Activated naive CD4-positive, alpha-beta T cell treated with anti-CD3 and anti-CD28 coated beads for 36 hours (primary cell): ENCODE measurements at regions of chr4 and their contacts with region 1.

Region 1: GRCh38 chr4:2761035-2761923 is 5.1 kb upstream of the TNIP2 start:
- DNase-seq: no peak
- H3K4me3 Mint-ChIP-seq: no peak overlapping the region
- H3K27ac Mint-ChIP-seq: no peak overlapping the region
- H3K4me1 Mint-ChIP-seq: peaks cover 5% of the 10 kb centered on the region
- H3K27me3 Mint-ChIP-seq: no peaks in the 10 kb centered on the region

Region 2: DNA sequence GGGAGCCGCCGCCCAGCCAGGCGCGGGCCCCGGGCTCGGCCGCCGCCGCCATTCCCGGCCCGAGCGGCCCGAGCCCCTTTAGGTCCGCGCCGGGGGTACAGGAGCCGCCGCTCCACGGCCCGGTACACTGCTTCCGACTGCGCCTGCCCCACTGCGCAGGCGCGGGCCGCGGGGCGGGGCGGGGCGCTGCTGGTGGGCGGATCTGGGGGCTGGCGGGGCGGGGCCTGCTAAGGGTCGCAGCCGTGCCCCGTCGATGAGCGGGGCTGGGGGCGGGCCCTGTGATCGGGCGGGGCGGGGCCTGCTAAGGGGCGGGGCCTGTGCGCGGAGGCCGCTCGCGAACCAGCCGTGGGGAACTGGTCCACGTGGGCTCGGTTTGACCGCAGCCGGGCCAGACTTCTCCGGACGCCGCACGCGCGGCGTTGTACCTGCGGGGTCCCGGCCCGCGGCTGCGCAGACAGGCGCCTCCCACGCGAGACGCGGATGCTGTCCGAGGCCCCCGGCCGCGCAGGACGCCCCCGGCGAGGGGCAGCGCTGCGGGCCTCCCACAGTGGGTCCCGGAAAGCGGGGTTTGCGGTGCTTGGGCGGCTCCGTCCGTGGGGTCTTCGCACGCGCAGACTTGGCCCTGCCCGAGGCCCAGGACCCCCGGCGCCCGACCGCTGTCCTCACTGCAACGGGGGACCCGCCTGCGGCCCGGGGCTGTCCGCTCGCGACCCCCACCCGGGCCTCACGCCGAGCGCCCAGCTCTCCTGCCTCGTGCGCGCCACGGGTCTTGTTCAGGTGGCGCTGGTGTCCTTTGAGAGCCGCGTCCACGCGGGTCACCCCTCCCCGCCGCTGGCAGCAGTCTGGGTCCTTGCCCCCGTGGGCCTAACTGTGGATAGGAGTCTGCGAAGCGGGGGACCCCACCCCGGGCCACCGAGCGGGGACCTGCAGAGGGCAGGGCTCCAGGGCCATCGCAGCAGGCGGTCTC is 1787.6 kb before region 1 on chr4 and contains the start of gene DGKQ:
- CTCF ChIA-PET with region 1: no interaction called
- intact Hi-C with region 1: no loop called
- DNase-seq: peak; percentile 81
- H3K4me3 Mint-ChIP-seq: peak within 1 kb of the TSS; percentile 59
- H3K27ac Mint-ChIP-seq: no peak within 1 kb of the TSS
- H3K4me1 Mint-ChIP-seq: peaks cover 5% of the 10 kb centered on the region
- H3K27me3 Mint-ChIP-seq: no peaks in the 10 kb centered on the region
- total RNA-seq, gene DGKQ: 10.8 to 11.1 TPM

Region 3: DNA sequence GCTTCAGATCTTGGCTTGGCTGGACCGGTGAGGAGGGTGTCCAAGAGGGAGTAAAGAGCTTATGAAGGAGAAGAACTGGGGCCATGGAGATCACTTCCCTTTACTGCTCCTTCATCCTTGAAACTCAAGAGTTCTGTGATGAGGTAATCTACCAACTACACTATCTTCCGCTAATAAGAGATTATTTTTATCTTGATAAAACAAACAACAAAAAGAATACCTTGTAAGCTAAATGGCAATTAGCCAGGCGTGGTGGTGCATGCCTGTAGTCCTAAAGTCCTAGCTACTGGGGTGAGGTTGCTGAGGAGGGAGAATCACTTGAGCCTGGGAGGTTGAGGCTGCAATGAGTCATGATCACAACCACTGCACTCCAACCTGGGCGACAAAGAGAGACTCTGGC is 566.8 kb before region 1 on chr4:
- CTCF ChIA-PET with region 1: no interaction called
- intact Hi-C with region 1: no loop called
- DNase-seq: no peak
- H3K4me3 Mint-ChIP-seq: no peak overlapping the region
- H3K27ac Mint-ChIP-seq: no peak overlapping the region
- H3K4me1 Mint-ChIP-seq: no peaks in the 10 kb centered on the region
- H3K27me3 Mint-ChIP-seq: no peaks in the 10 kb centered on the region

Region 4: GRCh38 chr4:2484993-2485392 is 276.3 kb before region 1 on chr4:
- CTCF ChIA-PET with region 1: no interaction called
- intact Hi-C with region 1: no loop called
- DNase-seq: peak; percentile 85
- H3K4me3 Mint-ChIP-seq: peak overlapping the region; percentile 46
- H3K27ac Mint-ChIP-seq: peak overlapping the region; percentile 68
- H3K4me1 Mint-ChIP-seq: peaks cover 87% of the 10 kb centered on the region
- H3K27me3 Mint-ChIP-seq: no peaks in the 10 kb centered on the region

Region 5: DNA sequence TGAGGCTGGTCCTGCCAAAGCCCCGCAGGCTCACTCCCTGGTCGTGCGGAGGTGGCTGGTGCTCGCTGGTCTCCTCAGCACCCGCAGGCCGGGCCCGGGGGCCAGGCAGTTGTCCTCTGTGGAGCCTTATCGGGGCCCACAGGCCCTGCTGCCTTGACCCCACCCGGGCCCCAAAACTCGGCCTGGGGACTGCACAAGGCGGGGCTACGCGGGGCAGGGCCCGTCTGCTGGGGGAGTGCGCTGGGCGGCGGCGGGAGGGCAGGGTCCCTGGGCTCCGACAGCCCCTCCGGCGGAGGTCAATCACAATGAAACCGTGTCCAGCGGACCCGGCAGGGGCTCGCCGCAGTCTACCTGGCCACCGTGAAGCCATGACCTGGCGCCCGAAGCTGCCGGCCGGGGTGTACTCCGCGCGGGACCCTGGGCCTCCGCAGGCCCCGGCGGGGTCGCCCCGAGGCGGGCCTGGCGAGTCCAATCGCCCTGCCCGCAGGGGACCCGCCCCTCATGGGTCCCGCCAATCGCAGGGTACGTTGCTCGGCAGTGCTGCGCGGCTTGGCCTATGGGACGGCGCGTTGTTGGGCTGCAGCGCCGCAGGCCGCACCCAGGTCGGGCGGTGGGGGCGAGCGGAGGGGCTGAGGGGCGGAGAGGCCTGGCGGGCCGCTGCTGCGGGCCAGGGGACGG is 82.1 kb after region 1 on chr4 and contains the start of gene ADD1:
- CTCF ChIA-PET with region 1: interaction called, 4 read pairs
- intact Hi-C with region 1: loop called (anchors 2 kb)
- DNase-seq: peak; percentile 92
- H3K4me3 Mint-ChIP-seq: peak within 1 kb of the TSS; percentile 83
- H3K27ac Mint-ChIP-seq: peak within 1 kb of the TSS; percentile 91
- H3K4me1 Mint-ChIP-seq: peaks cover 58% of the 10 kb centered on the region
- H3K27me3 Mint-ChIP-seq: no peaks in the 10 kb centered on the region
- total RNA-seq, gene ADD1: 165 TPM

Region 6: DNA sequence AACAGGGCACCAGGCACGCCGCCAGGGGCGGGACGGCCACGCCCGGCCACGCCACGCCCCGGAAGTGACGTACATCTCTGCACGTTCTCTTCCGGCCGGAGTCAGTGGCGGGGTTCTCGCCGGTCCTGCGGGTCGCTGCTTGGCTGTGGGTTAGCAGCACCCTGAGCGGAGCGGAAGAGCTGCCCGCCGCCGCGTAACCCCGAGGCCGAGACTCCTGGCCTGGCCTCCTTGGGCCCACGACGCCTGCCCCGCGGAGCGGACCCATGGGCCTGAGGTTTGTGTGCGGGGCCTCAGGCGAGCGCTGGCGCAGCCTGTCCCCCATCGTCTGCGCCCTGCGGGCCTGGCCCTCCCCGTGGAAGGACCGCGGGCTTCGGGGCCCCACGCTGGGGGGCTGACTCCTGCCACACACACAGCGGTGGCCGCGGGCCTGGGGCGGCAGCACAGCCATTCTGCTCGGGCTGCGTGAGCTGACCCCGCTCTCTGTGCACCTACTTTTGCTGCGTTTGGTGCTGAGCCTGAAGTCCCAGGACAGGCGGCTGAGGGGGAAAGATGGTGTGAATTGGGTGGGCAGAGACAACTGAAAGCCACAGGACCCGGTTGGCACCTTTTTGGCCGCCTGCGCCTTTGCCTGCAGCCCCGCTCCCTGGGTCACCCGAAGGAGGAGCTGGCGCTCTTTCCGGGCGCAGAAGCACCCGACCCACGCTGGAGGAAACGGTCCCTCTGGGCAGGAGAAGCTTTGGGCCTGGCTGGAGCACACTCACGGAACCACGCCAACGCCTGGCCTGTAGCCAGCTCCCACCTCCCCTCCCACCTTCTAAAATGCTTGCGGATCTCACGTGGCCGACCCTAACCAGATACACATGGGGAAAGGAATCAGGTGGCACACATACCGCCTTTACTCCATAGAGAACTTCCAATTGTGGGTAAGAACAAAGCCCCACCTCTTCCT is 173.8 kb after region 1 on chr4:
- CTCF ChIA-PET with region 1: interaction called, 6 read pairs
- intact Hi-C with region 1: loop called (anchors 1 kb)
- DNase-seq: peak; percentile 97
- H3K4me3 Mint-ChIP-seq: peak overlapping the region; percentile 89
- H3K27ac Mint-ChIP-seq: peak overlapping the region; percentile 96
- H3K4me1 Mint-ChIP-seq: peaks cover 57% of the 10 kb centered on the region
- H3K27me3 Mint-ChIP-seq: no peaks in the 10 kb centered on the region

Region 7: DNA sequence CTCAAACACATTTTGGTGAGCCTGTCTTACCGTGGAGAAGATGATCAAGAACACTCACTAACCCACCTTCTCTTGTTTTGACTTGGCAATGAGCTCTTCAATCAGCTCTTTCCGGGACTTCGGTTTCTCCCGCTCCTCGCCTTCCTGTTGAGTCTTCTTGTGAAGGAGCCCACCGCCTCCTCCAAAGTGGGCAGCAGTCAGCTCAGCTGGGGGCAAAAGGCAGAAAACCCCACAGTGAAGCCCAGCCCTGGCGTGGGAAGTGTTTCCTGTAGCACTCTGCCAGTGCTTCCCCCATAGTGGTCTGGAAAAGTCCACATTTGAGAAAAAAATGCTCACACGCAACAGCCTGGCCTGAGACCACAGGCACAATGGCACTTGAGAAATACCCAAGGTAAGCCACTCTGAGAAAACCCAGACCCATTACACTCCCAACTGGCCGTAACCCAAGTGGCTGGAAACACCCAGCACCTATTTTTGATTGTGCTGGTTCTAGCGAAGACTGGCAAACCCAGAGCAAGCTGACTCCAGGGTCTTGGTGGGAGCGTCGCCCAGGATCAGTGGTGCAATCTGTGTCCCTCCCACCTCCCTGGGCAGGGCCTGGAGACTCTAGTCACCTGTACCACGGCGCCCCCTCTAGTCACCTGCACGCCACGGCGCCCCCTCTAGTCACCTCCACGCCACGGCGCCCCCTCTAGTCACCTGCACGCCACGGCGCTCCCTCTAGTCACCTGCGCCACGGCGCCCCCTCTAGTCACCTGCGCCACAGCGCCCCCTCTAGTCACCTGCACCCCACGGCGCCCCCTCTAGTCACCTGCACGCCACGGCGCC is 193.3 kb after region 1 on chr4:
- CTCF ChIA-PET with region 1: interaction called, 7 read pairs
- intact Hi-C with region 1: loop called (anchors 1 kb)
- DNase-seq: peak; percentile 85
- H3K4me3 Mint-ChIP-seq: peak overlapping the region; percentile 39
- H3K27ac Mint-ChIP-seq: peak overlapping the region; percentile 99
- H3K4me1 Mint-ChIP-seq: peaks cover 59% of the 10 kb centered on the region
- H3K27me3 Mint-ChIP-seq: no peaks in the 10 kb centered on the region

Region 8: GRCh38 chr4:3037957-3038461 is 276.7 kb after region 1 on chr4:
- CTCF ChIA-PET with region 1: interaction called, 3 read pairs
- intact Hi-C with region 1: loop called (anchors 1 kb)
- DNase-seq: peak; percentile 45
- H3K4me3 Mint-ChIP-seq: peak overlapping the region; percentile 69
- H3K27ac Mint-ChIP-seq: no peak overlapping the region
- H3K4me1 Mint-ChIP-seq: peaks cover 37% of the 10 kb centered on the region
- H3K27me3 Mint-ChIP-seq: no peaks in the 10 kb centered on the region